ENCODE measurements at regions of chr2 and their contacts with region 1.

Region 1: DNA sequence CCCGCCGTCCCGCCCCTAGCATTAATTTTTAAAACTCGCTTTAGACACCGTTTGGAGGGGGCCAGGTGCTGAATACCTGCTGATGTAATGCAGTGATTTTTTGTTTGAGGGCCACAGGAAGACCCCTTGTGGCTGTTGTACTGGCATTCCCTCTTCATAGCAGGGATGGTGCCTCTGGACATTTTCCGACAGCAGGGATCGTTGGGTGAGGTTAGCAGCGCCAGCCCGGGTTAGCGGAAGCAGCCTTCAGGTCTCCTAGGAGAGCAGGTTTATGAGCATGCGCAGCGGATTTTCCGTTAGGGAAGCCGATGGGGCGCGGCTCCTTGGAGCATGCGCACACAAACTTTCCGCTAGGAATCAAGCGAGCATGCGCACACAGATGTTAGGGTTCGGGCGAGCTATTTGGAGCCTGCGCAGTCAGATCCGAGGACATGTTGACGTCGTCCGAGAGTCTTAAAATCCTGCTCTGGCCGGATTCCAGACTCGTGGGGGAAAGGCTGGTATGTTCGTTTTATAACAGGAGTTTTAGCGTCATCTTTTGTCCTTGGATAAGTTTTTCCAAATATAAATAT is 17.2 kb upstream of the C2orf74 start:
- DNase-seq: peak; percentile 95
- H3K4me3 ChIP-seq: peak overlapping the region; percentile 73 to 97 (median 90)
- H3K27ac ChIP-seq: peak overlapping the region; percentile 85
- H3K4me1 ChIP-seq: no peaks in the 10 kb centered on the region
- H3K27me3 ChIP-seq: no peaks in the 10 kb centered on the region
- CTCF ChIP-seq: no peak

Region 2: DNA sequence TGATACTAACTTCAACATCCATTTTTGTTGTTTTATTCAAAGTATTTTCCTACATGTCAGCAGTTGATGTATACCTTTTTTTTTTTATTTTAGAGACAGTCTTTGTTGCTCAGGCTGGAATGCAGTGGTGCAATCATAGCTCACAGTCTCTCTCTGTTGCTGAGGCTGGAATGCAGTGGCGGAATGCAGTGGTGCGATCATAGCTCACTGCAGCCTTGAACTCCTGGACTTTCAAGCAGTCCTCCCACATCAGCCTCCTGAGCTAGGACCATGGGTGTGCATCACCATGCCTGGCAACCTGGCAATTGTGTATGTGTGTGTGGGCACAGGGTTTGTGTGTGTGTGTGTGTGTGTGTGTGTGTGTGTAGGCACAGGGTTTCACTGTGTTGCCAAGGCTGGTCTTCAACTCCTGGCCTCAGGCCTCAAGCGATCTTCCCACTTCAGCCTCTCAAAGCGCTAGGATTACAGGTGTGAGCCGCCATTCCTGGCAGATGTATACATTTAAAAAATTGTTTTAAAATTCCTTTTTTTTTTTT is 54.3 kb before region 1 on chr2:
- CTCF ChIA-PET with region 1: no interaction called
- dilution Hi-C with region 1: loop called (anchors 10 kb)
- in situ Hi-C with region 1: no loop called
- intact Hi-C with region 1: no loop called
- DNase-seq: no peak
- H3K4me3 ChIP-seq: no peak overlapping the region
- H3K27ac ChIP-seq: no peak overlapping the region
- H3K4me1 ChIP-seq: no peaks in the 10 kb centered on the region
- H3K27me3 ChIP-seq: no peaks in the 10 kb centered on the region
- CTCF ChIP-seq: no peak

Region 3: GRCh38 chr2:61165946-61166345 is 21.2 kb after region 1 on chr2:
- CTCF ChIA-PET with region 1: no interaction called
- dilution Hi-C with region 1: no loop called
- in situ Hi-C with region 1: no loop called
- intact Hi-C with region 1: no loop called
- DNase-seq: no peak
- H3K4me3 ChIP-seq: no peak overlapping the region
- H3K27ac ChIP-seq: no peak overlapping the region
- H3K4me1 ChIP-seq: no peaks in the 10 kb centered on the region
- H3K27me3 ChIP-seq: no peaks in the 10 kb centered on the region
- CTCF ChIP-seq: no peak

Measured in mammary epithelial cell (primary cell).